Activated CD8-positive, alpha-beta memory T cell treated with anti-CD3 and anti-CD28 coated beads, Interleukin-2, amount 10 ng/mL, durations not matched to agents 7 days and 5 days (primary cell): ENCODE measurements at regions of chr19 and their contacts with region 1.

Region 1: DNA sequence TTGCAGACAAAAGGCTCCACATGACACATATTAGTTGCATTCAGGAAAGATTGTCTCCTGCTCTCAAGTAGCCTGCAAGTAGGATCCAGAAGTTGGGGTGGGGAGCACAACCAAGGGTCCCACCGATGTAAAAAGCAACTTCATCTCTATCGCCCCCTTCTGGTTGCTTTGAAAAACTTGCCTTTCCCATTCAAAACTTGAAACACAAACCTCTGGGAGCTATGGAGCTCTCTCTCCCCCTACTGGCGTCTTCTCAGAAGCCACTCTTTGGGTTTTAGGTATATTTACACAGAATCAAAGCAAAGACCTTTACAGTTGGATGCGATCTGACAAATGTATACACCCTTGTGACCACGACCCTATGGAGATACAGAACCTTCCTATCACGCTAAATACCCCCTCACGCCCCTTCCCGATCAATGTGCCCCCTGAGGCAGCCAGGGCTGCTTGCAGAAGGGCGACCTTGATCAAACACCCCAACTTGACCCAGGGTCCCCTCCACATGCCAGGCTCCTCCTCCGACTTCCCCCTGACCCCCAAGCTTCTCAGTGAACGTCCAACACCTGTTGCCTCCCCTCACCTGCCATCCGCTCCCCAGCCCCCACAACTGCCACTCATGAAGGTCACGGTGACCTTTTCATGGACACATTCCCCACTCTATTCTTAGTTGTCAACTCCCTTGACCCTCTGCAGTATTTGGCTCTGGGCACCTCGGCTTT is 10.1 kb downstream of the NOSIP start:
- DNase-seq: peak; percentile 87
- ATAC-seq: peak; percentile 53
- H3K4me3 Mint-ChIP-seq: no peak overlapping the region
- H3K27ac Mint-ChIP-seq: peak overlapping the region; percentile 86
- H3K4me1 Mint-ChIP-seq: peaks cover 49% of the 10 kb centered on the region
- H3K27me3 Mint-ChIP-seq: no peaks in the 10 kb centered on the region

Region 2: DNA sequence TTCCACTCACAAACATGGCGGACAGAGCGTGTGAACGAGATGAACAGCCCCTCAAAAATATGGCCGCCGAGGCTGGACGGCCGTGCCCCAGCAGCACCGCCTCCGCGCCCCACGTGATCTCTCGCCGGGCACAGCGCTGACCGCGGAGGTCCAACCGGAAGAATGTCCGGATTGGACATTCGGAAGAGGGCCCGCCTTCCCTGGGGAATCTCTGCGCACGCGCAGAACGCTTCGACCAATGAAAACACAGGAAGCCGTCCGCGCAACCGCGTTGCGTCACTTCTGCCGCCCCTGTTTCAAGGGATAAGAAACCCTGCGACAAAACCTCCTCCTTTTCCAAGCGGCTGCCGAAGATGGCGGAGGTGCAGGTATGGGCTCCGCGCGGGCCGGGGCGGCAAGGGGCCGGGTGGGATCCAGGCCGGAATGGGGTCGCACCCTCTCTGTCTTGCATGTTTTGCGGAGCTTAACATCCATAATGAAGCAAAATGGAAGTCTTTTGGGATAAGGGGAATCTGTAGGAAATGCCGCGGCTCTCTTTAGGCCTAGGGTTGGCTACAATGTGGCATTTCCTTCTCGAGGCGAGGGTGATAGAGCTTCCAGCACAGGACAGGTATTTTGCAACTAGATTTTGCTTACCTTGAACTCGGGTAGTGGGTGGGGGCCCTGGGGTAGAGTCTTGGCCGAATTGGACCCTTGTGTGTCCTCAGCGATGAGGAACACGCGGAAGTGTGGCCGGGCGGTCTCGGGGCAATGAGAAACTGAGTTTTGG is 82.8 kb before region 1 on chr19 and contains the start of gene RPL13A:
- CTCF ChIA-PET with region 1: interaction called, 13 read pairs
- DNase-seq: peak; percentile 100
- ATAC-seq: peak; percentile 88
- H3K4me3 Mint-ChIP-seq: peak within 1 kb of the TSS; percentile 98
- H3K27ac Mint-ChIP-seq: peak within 1 kb of the TSS; percentile 94
- H3K4me1 Mint-ChIP-seq: peaks cover 46% of the 10 kb centered on the region
- H3K27me3 Mint-ChIP-seq: no peaks in the 10 kb centered on the region
- total RNA-seq, gene RPL13A: 2,143 to 2,523 TPM

Region 3: DNA sequence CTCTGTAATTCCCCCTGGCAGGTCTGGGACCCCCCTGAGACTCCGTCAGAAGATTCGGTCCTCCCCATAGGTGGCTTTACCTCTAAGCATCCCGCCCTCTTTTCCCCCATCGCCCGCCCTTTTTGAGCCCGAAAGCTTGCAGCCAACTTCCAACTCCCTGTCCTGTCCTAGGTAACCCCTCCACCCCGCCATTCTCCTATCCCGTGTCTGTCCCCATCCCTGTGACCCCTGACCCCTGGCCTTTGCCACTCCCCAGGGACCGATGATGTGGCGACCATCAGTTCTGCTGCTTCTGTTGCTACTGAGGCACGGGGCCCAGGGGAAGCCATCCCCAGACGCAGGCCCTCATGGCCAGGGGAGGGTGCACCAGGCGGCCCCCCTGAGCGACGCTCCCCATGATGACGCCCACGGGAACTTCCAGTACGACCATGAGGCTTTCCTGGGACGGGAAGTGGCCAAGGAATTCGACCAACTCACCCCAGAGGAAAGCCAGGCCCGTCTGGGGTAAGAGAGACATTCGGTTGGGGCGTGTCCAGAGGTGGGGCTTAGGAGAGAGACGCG is 42.0 kb before region 1 on chr19:
- CTCF ChIA-PET with region 1: interaction called, 34 read pairs
- DNase-seq: no peak
- ATAC-seq: no peak
- H3K4me3 Mint-ChIP-seq: peak overlapping the region; percentile 69
- H3K27ac Mint-ChIP-seq: no peak overlapping the region
- H3K4me1 Mint-ChIP-seq: peaks cover 19% of the 10 kb centered on the region
- H3K27me3 Mint-ChIP-seq: peaks cover 3% of the 10 kb centered on the region

Region 4: DNA sequence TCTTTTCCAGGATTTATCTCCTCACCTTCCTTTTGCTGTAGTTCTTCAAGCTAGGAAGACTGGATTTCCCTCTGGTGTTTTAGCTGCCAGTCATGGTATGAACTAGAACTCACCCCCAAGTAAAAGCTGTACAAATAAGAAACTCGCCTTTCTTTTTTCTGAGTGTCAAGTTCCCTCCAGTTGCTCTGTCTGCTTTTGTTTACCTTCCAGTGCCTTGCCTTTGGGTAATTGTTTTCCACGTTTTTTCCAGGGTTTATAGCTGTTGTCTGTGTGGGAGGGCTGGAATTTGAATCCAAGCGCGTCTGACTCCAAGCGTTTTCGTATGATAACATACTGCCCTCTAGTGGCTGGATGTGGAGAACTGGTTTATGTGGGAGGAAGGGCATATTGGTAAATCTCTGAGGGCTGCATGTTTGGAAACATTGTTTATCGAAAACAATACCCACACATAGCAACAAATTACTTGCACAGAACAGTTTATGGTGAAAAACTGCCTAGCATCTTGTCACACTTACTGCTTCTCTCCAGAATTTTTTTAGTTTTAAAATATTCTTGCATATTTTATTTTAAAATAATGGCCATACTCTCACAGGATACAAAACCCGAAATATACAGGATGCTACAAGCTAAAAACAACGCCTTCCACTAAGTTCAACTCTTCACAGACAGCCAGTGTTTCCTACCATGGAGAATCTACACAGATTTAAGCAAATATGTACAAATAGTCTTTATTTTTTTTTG is 23.3 kb before region 1 on chr19:
- CTCF ChIA-PET with region 1: interaction called, 325 read pairs
- DNase-seq: peak; percentile 78
- ATAC-seq: peak; percentile 85
- H3K4me3 Mint-ChIP-seq: peak overlapping the region; percentile 23
- H3K27ac Mint-ChIP-seq: peak overlapping the region; percentile 55
- H3K4me1 Mint-ChIP-seq: peaks cover 23% of the 10 kb centered on the region
- H3K27me3 Mint-ChIP-seq: no peaks in the 10 kb centered on the region

Region 5: DNA sequence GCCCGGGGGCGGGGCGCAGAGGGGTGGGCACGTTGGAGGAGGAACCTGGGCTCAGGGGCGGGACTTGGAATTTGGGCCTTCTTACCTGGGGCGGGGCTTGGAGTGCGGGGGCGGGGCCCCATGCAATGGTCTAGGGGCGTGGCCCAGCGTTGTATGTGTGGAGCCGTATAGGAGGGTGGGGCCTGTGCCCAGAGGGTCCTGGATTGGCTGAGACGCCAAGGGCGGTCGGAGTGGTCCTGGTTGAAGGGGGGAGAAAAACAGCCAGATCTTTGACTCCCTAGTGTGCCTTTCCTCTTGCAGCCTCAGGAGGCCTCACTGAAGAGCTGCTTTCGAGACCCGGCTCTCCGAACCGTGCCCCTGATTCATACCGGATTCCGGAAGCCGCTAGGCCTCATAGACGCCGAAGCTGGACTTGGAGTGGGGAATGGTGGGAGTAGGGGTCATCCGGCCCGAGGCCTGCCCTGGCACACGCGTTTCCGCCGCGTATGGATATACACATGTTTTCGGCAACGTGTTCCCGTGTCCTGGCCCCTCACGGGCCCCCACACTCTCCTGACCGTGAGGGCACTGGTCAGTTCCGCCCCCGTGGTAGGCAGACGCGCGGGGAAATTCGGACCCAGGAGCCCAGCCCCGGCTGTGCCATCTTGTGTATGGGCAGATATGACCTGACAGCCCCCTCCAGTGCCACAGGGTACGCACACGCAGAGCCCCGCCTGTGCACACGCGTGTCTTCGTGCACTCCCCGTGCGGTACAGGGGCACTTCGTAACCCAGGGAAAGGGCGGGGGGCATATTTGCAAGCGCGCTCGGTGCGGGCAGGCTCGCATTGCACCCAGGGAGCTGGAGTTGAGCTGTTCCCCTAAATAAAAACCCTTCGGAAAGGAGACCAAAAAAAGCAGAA is 20.0 kb after region 1 on chr19:
- CTCF ChIA-PET with region 1: interaction called, 13 read pairs
- DNase-seq: peak; percentile 98
- ATAC-seq: peak; percentile 85
- H3K4me3 Mint-ChIP-seq: peak overlapping the region; percentile 87
- H3K27ac Mint-ChIP-seq: peak overlapping the region; percentile 89
- H3K4me1 Mint-ChIP-seq: peaks cover 30% of the 10 kb centered on the region
- H3K27me3 Mint-ChIP-seq: peaks cover 4% of the 10 kb centered on the region